Activated naive CD4-positive, alpha-beta T cell treated with anti-CD3 and anti-CD28 coated beads, Interleukin-2, amount 10 ng/mL, durations not matched to agents 7 days and 5 days (primary cell): ENCODE measurements at regions of chr2 and their contacts with region 1.

Region 1: GRCh38 chr2:72993147-72993932 is 76.0 kb downstream of the EMX1 start:
- DNase-seq: peak; percentile 57
- H3K4me3 Mint-ChIP-seq: no peak overlapping the region
- H3K27ac Mint-ChIP-seq: no peak overlapping the region
- H3K4me1 Mint-ChIP-seq: no peaks in the 10 kb centered on the region
- H3K27me3 Mint-ChIP-seq: no peaks in the 10 kb centered on the region

Region 2: GRCh38 chr2:72515696-72516095 is 477.6 kb before region 1 on chr2:
- CTCF ChIA-PET with region 1: no interaction called
- DNase-seq: no peak
- H3K4me3 Mint-ChIP-seq: no peak overlapping the region
- H3K27ac Mint-ChIP-seq: no peak overlapping the region
- H3K4me1 Mint-ChIP-seq: no peaks in the 10 kb centered on the region
- H3K27me3 Mint-ChIP-seq: no peaks in the 10 kb centered on the region

Region 3: GRCh38 chr2:72973566-72974435 is 19.5 kb before region 1 on chr2:
- CTCF ChIA-PET with region 1: interaction called, 12 read pairs
- DNase-seq: peak; percentile 62
- H3K4me3 Mint-ChIP-seq: no peak overlapping the region
- H3K27ac Mint-ChIP-seq: no peak overlapping the region
- H3K4me1 Mint-ChIP-seq: no peaks in the 10 kb centered on the region
- H3K27me3 Mint-ChIP-seq: peaks cover 13% of the 10 kb centered on the region

Region 4: DNA sequence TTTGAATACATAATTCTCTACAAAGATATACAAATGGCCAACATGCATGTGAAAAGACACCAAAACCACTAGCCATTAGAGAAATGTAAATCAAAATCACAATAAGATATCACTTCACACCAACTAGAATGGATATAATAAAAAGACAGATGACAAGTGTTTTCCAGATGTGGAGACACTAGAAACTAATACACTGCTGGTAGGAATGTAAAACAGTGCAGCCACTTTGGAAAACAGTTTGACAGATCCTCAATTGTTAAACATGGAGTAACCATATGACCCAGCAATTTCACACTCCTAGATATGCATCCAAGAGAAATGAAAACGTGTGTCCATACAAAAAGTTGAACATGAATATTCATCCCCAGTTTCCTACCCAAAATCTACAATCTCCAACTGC is 129.2 kb after region 1 on chr2:
- CTCF ChIA-PET with region 1: no interaction called
- DNase-seq: no peak
- H3K4me3 Mint-ChIP-seq: no peak overlapping the region
- H3K27ac Mint-ChIP-seq: no peak overlapping the region
- H3K4me1 Mint-ChIP-seq: no peaks in the 10 kb centered on the region
- H3K27me3 Mint-ChIP-seq: peaks cover 32% of the 10 kb centered on the region

Region 5: DNA sequence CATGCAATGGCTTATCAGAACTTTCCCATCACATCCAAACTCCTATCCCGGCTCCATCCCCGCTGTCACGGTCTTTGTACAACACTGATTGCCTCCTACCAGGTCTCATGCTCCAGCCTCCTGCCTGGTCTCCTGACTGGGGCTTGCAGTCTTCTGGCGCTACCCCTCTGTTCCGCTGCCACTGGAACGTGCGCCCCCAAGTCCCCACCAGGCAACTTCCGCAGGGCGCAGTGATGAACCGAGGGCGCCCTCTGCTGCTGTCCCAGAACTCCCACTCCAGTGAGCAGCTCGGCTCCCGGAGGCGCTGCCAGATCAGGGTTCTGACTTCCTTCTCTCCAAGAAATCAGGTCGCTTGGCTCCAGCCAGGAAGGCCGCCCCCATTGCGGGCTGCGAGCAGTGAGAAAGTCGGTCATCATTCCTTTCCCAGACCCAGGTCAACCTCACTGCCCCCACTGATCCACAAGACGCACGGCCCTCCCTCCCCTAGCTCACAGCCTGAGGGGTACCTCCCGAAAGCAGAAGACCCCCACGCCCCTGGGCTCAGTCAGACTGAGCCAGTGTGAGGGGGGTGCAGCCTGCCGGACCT is 163.3 kb after region 1 on chr2:
- CTCF ChIA-PET with region 1: interaction called, 19 read pairs
- DNase-seq: peak; percentile 63
- H3K4me3 Mint-ChIP-seq: no peak overlapping the region
- H3K27ac Mint-ChIP-seq: no peak overlapping the region
- H3K4me1 Mint-ChIP-seq: no peaks in the 10 kb centered on the region
- H3K27me3 Mint-ChIP-seq: peaks cover 46% of the 10 kb centered on the region

Region 6: DNA sequence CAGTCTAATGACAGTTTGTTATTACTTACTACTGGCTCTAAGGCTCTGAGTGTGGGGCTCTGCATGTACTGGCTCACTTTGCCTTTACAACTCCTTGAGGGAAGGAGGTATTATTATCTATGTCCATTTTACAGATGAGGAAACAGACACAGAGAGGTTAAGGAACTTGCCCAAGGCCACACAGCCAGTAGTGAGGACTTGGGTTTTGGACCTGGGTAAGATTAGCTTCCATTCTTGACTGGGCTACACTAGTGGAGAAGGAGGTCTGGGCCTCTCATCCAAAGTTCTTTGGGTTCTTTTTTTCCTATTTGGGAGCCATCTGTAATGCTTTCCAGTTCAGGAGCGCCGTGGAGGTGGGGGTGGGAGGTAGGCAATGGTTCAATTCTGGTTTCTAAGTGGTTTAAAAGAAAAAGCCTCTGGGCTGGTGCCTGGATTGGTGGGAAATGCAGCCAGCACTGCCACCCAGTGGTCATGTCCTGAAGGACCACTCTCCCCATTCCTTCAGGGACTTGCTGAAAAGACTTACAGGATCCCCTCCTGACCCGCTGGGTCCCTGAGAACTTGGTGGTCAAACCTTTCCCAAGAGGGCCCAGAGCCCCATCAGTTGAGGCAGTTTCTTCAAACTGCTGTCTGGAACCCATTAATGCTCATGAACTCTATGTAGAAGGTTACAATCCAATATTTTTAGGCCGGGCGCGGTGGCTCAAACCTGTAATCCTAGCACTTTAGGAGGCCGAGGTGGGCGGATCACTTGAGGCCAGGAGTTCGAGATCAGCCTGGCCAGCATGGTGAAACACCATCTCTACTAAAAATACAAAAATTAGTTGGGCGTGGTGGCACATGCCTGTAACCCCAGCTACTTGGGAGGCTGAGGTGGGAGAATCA is 170.4 kb after region 1 on chr2:
- CTCF ChIA-PET with region 1: interaction called, 13 read pairs
- DNase-seq: peak; percentile 72
- H3K4me3 Mint-ChIP-seq: no peak overlapping the region
- H3K27ac Mint-ChIP-seq: no peak overlapping the region
- H3K4me1 Mint-ChIP-seq: no peaks in the 10 kb centered on the region
- H3K27me3 Mint-ChIP-seq: peaks cover 14% of the 10 kb centered on the region

Region 7: DNA sequence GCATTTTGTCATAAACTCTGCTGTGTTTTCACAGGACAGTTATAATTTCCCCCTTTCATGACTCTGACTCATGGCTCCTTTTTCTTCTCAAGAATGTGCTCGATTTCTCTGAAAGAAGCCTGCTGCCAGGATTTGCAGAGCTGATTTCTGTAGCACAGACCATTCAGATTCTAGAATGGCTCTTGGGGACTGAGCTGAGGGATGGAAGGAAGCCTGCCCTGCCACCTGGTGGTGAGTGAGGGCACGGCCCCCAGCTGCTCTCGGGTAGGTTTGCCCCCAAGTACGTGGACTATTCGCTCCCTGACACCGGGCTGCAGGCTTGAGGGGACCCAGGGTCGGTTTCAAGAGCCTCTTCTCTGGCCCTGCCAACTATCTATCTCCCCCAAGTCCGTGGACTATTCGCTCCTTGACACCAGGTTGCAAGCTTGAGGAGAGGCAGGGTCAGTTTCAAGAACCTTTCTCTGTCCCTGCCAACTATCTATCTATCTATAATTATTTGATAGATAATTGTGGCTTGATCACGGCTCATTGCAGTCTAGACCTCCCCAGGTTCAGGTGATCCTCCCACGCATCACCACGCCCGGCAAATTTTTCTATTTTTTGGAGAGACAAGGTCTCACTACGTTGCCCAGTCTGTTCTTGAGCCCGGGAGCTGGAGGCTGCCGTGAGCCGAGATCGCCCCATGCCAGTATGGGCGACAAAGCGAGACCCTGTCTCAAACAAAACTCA is 219.3 kb after region 1 on chr2:
- CTCF ChIA-PET with region 1: interaction called, 11 read pairs
- DNase-seq: peak; percentile 79
- H3K4me3 Mint-ChIP-seq: no peak overlapping the region
- H3K27ac Mint-ChIP-seq: no peak overlapping the region
- H3K4me1 Mint-ChIP-seq: peaks cover 32% of the 10 kb centered on the region
- H3K27me3 Mint-ChIP-seq: peaks cover 20% of the 10 kb centered on the region